Activated CD8-positive, alpha-beta T cell treated with anti-CD3 and anti-CD28 coated beads, Interleukin-2, amount 10 ng/mL, durations not matched to agents 7 days and 5 days (primary cell): ENCODE measurements at regions of chr17 and their contacts with region 1.

Region 1: DNA sequence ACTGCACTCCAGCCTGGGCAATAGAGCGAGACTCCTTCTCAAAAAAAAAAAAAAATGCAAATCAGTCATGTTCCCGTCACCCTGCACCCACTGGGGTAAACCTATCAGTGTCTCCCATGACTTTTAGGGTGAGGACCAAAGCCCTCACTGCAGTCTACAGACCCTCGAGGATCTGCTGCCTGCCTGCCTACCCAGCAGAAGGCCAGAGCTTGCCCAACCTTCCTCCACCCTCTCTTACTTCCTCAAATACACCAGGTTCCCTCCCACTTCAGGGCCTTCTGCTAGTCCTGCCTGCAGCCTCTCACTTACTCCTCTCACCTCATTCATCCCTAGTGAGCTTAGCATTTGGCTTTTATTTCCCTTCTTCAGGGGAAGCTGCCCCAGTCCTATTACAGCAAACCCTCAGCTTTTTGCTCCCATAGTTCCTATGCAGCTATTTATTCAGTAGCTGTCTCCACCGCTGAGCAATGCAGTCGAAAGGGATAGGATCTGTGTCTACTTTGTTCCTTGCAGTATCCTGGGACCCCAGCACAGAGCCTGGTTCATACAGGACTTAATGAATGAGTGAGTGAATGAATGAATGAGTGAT is 17.8 kb upstream of the TOB1 start:
- DNase-seq: no peak
- ATAC-seq: no peak
- H3K4me3 Mint-ChIP-seq: no peak overlapping the region
- H3K27ac Mint-ChIP-seq: no peak overlapping the region
- H3K4me1 Mint-ChIP-seq: peaks cover 22% of the 10 kb centered on the region
- H3K27me3 Mint-ChIP-seq: peaks cover 12% of the 10 kb centered on the region

Region 2: DNA sequence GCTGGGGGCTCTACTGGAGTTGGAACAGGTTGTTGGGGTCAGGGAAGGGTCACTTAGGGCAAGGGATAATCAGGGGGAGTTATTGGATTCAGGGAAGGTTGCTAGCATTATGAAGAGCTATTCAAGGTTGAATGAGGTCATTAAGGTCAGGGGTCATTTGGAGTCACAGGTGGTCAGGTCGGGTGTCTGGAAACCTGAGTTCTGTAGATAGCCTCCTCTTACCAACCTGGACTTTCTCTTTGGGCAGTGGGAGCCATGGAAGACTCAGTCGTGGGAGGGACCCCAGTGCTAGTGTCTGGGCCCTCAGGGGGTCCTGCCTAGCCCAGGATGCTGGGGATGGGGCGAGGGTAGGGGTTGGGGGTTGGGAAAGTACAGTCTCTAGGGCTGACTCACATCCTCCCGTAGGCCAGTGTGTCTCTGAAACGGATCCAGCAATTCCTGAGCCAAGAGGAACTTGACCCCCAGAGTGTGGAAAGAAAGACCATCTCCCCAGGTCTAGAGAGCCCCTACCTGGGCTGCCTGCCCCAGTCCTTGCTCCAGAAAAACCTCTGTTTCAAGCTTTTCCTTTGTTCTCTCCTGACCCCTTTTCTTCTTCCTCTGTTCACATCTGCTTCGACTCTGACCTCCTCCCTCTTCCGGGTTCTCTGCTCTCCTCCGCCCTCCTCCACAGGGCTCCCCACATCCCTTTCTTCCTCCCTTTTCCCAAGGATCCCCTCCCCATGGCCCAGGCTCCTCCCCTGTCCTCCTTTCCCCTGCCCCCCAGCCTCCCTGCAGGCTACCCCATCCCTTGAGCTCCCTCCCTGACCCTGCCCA is 215.7 kb before region 1 on chr17:
- CTCF ChIA-PET with region 1: no interaction called
- POLR2A ChIA-PET with region 1: no interaction called
- DNase-seq: no peak
- ATAC-seq: no peak
- H3K4me3 Mint-ChIP-seq: no peak overlapping the region
- H3K27ac Mint-ChIP-seq: no peak overlapping the region
- H3K4me1 Mint-ChIP-seq: no peaks in the 10 kb centered on the region
- H3K27me3 Mint-ChIP-seq: no peaks in the 10 kb centered on the region

Region 3: DNA sequence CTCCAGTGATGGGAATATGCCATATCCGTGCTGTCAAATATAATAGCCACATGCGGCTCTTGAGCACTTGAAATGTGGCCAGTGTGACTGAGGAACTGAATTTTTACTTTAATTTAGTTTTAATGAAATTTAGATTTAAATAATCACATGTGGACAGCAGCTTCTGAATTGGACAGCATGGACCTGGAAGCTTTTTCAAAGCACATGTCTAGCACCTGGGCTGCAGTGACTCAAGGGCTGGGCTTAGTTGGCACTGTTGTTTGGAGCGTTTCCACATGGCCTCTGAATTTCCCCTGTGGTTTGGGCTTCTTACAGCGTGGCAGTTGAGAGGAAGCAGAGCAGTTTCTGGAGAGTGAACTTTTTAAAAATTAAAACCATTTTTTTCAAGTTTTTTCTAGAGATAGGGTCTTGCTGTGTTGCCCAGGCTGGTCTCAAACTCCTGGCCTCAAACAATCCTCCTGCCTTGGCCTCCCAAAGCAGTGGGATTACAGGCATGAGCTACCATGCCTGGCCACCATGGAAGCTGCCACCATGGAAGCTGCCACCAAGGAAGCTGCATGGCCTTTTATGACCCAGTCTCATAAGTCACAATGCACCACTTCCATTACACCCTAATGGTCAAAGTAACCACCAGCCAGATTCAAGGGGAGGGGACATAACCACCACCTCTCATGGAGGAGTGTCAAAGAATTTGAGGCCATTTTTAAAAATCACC is 11.1 kb before region 1 on chr17:
- CTCF ChIA-PET with region 1: interaction called, 14 read pairs
- POLR2A ChIA-PET with region 1: interaction called, 28 read pairs
- DNase-seq: peak; percentile 53
- ATAC-seq: peak; percentile 56
- H3K4me3 Mint-ChIP-seq: no peak overlapping the region
- H3K27ac Mint-ChIP-seq: peak overlapping the region; percentile 34
- H3K4me1 Mint-ChIP-seq: peaks cover 43% of the 10 kb centered on the region
- H3K27me3 Mint-ChIP-seq: peaks cover 34% of the 10 kb centered on the region